Left cardiac atrium (tissue), 4 donors: ENCODE measurements at regions of chr4 and their contacts with region 1.

Region 1: GRCh38 chr4:78517050-78517652 is 34.4 kb upstream of the ANXA3 start:
- DNase-seq: no peak
- ATAC-seq: no peak

Region 2: GRCh38 chr4:77959566-77960338 is 557.4 kb before region 1 on chr4:
- intact Hi-C with region 1: loop called in 1 of 2 experiments (anchors 5 kb)
- DNase-seq: no peak
- ATAC-seq: no peak

Region 3: DNA sequence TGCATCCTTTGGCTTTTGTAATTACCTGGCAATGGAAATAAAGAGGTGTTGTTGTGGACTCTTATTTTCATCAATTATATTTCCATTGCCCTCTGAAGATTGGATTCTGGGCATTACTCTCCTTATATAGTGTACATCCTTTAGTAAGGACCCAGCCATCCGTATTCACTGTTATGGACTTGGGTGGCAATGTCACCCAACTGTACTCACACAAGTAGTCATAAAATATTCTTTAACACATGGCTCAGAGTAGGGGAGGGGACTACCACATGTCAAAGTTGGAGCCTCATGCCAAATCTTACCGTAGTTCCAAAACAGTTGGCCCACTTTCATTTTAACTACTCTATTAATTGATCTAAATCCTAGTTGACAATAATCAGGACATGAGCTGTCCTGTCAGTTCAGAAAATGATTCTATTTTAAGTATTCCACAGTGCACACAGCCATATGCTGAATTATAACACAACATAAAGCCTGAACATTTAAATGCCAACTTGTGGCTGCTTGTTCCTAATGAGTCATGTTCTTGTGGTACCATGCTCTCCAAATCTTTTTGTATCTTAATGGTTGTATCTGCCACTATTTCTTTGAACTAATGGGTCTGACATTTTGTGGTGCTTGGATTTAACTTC is 455.1 kb before region 1 on chr4:
- intact Hi-C with region 1: loop called in 1 of 2 experiments (anchors 10 kb)
- DNase-seq: no peak
- ATAC-seq: no peak